AG04449 (cell line): ENCODE measurements at regions of chr12 and their contacts with region 1.

Region 1: GRCh38 chr12:546921-547845 is 87.4 kb downstream of the B4GALNT3 start:
- DNase-seq: no peak
- H3K4me3 ChIP-seq: peak overlapping the region; percentile 36; the same call in 1 of the 2 replicates
- CTCF ChIP-seq: peak; percentile 100

Region 2: DNA sequence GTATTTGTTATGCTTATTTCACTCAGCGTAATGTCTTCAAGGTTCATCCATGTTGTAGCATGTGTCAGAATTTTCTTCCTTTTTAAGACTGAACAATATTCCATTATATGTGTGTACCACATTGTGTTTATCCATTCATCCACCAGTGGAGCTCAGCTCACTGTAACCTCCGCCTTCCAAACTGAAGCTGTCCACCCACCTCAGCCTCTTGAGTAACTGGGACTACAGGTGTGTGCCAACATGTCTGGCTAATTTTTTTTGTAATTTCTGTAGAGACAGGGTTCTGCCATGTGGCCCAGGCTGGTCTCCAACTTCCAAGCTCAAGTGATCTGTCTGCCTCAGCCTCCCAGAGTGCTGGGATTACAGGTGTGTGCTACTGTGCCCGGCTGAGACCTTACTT is 124.7 kb before region 1 on chr12:
- CTCF ChIA-PET with region 1: interaction called, 40 read pairs
- POLR2A ChIA-PET with region 1: no interaction called
- DNase-seq: no peak
- H3K4me3 ChIP-seq: no peak overlapping the region
- CTCF ChIP-seq: no peak

Region 3: DNA sequence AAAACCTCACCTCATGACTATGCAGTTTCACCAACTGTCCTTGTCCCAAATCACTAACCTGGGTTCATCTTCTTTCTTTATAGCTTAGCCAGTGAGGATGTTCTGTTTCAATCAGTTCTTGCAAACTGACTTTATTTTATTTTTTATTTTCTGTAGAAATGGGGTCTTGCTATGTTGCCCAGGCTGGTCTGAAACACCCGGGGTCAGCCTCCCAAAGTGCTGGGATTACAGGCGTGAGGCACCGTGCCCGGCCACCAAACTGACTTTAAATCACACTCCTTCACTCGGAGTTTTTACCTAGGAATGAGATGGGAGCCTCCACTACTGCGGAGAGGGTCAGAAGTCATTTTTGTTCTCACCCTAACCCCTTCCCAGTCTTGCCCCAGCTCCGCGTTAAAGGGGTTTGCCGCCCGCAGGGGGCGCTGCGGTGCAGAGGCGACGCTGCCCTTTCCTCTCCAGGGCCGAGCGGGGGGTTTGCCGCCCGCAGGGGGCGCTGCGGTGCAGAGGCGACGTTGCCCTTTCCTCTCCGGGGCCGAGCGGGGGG is 94.4 kb before region 1 on chr12:
- CTCF ChIA-PET with region 1: interaction called, 236 read pairs
- POLR2A ChIA-PET with region 1: no interaction called
- DNase-seq: no peak
- H3K4me3 ChIP-seq: no peak overlapping the region
- CTCF ChIP-seq: peak; percentile 0

Region 4: DNA sequence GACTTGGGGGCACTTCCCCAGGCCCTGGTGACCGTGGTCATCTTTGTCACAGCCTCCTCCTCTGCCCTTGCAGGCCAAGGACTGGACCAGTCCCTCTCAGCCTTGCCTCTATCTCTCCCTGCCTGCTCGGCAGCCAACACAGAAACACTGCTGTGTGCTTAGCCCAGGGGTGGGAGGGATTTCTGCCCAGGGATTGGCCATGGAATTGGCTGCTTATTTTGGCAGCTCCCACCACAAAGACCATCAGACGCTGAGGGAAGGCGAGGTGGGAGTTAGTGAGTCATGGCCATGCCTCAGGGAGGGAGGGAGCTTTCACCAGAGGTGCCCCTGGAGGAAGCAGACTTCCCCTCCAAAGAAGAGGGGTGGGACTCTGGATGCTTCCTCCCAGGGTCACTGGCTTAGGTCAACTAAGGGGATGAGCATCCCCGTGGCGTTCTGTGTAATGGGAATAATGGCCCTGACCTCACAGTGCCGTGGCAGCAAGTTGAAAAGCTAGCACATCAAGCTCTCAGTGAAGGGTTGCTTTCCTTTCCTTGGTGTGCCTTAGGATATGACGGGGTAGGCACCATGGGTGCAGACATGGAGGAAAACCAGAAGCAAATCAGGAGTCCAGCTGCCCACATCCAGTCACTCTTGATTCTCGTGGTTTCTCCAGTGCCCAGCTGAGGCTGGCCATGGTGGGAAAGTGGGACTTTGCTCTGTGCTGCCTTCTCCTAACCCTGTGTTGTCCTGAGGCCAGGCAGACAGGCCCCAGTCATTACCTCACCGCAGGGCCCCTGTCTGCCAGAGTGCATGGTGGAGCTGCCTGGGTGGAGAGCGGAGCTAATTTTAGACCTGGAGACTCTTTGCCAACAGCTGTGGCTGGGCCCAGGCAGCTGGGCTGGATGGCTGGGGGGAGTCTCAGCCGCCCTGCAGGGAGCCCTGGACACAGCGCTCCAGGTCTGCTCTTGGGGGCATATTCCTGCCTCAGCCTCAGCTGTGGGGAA is 66.1 kb before region 1 on chr12:
- CTCF ChIA-PET with region 1: interaction called, 10 read pairs
- POLR2A ChIA-PET with region 1: no interaction called
- DNase-seq: no peak
- H3K4me3 ChIP-seq: no peak overlapping the region
- CTCF ChIP-seq: no peak

Region 5: GRCh38 chr12:517538-517937 is 29.6 kb before region 1 on chr12:
- CTCF ChIA-PET with region 1: interaction called, 15 read pairs
- POLR2A ChIA-PET with region 1: no interaction called
- DNase-seq: no peak
- H3K4me3 ChIP-seq: no peak overlapping the region
- CTCF ChIP-seq: no peak

Region 6: DNA sequence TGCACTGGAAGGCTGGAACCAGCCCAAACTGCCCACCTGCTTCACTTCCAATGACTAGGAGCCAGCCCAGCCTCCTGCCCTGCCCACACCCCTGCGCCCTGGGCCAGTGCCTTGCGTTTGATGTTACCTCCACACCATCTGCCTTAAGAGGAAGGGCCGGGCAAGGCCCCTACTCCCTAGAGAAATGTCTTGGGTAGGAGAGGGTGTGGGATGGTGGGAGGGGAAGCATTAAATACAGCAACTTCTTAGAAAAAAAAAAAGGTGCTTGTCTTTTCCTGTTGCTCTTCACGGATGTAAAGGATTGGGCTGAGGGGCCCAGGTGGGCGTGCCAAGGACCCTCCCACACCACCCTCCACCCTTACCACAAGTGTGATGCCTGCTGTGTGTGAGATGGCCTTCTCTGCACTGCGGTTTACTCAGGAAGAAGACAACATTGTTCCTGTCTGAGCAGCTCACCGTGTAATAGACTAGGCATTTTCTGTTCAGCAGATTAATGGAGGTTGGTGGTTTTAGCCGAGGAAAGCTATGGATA is 16.1 kb after region 1 on chr12:
- CTCF ChIA-PET with region 1: interaction called, 46 read pairs
- POLR2A ChIA-PET with region 1: no interaction called
- DNase-seq: no peak
- H3K4me3 ChIP-seq: no peak overlapping the region
- CTCF ChIP-seq: no peak